Activated CD8-positive, alpha-beta T cell treated with anti-CD3 and anti-CD28 coated beads, Interleukin-2, amount 10 ng/mL, durations not matched to agents 7 days and 5 days (primary cell): ENCODE measurements at regions of chr7 and their contacts with region 1.

Region 1: DNA sequence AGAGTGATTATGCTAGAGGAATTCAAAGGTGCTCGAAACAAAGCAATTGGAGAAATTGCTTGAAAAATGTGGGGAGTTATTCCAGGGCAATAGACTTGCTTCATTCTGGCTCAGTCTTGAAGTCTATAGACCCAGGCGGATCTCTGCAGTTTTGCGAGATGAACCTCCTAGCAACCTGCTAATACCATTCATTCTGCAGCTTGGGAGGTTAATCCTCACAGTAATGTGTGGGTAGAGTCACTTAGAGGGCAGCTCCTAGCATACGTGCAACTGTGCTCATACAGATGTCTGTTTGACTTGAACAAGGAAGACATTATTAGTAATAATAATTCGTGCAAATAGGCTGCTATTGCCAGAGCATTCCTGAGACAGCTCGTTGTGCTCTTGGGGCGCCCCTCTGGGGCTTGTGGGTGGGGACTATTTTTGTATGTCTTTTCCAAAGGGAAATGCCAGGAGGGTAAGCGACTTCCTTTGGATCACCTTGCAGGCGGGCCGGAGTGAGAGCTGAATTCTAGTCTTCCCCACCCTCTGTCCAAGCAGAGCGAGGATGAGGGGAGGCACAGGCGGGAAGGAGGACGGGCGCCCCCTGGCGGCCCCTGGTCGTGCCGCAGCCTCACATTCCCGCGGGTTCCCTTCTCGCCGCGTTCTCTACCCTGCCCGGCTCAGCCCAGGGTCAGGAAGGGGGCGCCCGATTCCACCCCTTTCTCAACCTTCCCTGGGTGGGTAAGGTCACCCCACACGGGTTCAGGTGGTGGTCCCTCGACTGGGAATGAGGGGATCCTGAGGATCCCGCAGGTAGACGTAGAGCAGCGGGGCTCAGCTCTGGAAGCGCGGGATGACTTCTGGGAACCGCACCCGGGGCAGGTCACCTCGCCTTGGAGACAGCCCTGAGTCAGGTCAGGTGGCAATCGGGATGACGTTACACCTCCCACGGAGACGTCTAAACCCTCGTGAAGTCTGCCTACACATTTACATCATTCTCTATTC is 241.5 kb downstream of the PHTF2 start:
- DNase-seq: peak; percentile 58
- ATAC-seq: peak; percentile 90
- H3K4me3 Mint-ChIP-seq: no peak overlapping the region
- H3K27ac Mint-ChIP-seq: no peak overlapping the region
- H3K4me1 Mint-ChIP-seq: peaks cover 4% of the 10 kb centered on the region
- H3K27me3 Mint-ChIP-seq: peaks cover 12% of the 10 kb centered on the region

Region 2: DNA sequence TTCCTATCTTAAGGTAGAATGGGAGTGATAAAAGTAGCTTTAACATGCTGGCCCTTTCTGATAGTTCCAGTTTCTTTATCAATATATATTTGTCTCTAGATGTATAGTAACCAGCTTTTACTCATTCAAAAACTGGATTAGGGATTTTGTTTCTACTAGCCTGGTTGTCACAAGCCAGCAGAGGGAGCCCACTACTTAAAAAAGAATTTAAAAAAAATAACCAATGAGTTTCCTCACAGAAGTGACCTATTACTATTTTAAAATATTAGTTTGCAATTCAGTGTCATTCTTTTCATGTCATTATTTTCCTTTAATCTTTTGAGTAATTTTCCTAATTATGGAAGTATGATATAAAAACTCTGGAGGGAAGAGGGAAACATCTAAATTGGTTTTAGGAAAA is 99.4 kb before region 1 on chr7:
- CTCF ChIA-PET with region 1: interaction called, 20 read pairs
- POLR2A ChIA-PET with region 1: no interaction called
- DNase-seq: peak; percentile 24
- ATAC-seq: no peak
- H3K4me3 Mint-ChIP-seq: no peak overlapping the region
- H3K27ac Mint-ChIP-seq: no peak overlapping the region
- H3K4me1 Mint-ChIP-seq: peaks cover 7% of the 10 kb centered on the region
- H3K27me3 Mint-ChIP-seq: no peaks in the 10 kb centered on the region

Region 3: GRCh38 chr7:77989981-77990566 is 50.0 kb before region 1 on chr7:
- CTCF ChIA-PET with region 1: interaction called, 11 read pairs
- POLR2A ChIA-PET with region 1: no interaction called
- DNase-seq: peak; percentile 31
- ATAC-seq: no peak
- H3K4me3 Mint-ChIP-seq: no peak overlapping the region
- H3K27ac Mint-ChIP-seq: no peak overlapping the region
- H3K4me1 Mint-ChIP-seq: no peaks in the 10 kb centered on the region
- H3K27me3 Mint-ChIP-seq: peaks cover 15% of the 10 kb centered on the region

Region 4: GRCh38 chr7:78020136-78020873 is 19.8 kb before region 1 on chr7:
- CTCF ChIA-PET with region 1: interaction called, 54 read pairs
- POLR2A ChIA-PET with region 1: no interaction called
- DNase-seq: peak; percentile 54
- ATAC-seq: peak; percentile 48
- H3K4me3 Mint-ChIP-seq: peak overlapping the region; percentile 58
- H3K27ac Mint-ChIP-seq: no peak overlapping the region
- H3K4me1 Mint-ChIP-seq: peaks cover 12% of the 10 kb centered on the region
- H3K27me3 Mint-ChIP-seq: peaks cover 38% of the 10 kb centered on the region